Mammary epithelial cell (primary cell): ENCODE measurements at regions of chrX and their contacts with region 1.

Region 1: DNA sequence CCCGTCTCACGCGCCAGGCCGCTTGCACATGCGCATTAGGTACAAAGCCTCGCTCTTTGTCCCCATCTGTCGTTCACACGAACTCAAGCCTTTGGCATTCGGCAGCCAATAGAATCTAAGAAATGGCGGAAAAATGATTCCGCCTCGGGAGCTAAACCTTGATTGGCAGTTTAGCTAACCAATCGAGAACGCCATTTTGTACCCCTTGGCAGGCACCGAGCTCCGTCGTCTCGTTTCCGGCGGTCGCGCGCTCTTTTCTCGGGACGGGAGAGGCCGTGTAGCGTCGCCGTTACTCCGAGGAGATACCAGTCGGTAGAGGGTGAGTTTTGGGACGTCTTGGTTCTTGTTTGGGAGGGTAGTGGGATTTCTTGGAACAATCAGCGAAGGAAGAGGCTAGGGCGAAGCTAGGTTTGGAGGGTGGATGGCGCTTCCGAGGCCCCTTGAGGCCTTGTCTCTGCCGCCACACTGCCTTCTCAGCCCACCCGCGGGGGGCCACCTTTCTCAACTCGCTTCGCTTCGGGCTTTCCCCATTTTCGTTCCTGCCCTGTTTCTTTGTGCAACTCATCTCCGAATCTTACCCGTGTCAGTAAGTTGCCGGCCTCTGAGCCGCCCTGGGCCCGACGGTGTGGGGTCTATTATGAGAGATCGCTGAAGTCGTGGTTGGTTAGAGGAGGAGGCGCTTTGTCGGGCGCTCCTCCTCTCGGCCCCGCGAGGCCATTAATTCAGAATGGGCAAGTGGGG is at the start of gene NONO:
- DNase-seq: peak; percentile 97
- H3K4me3 ChIP-seq: peak within 1 kb of the TSS; percentile 60 to 78 (median 77)
- H3K27ac ChIP-seq: peak within 1 kb of the TSS; percentile 88
- H3K4me1 ChIP-seq: peaks cover 2% of the 10 kb centered on the region
- H3K27me3 ChIP-seq: no peaks in the 10 kb centered on the region
- CTCF ChIP-seq: peak in 1 of 2 donors; percentile 27
- total RNA-seq, gene NONO: 274 to 294 TPM

Region 2: DNA sequence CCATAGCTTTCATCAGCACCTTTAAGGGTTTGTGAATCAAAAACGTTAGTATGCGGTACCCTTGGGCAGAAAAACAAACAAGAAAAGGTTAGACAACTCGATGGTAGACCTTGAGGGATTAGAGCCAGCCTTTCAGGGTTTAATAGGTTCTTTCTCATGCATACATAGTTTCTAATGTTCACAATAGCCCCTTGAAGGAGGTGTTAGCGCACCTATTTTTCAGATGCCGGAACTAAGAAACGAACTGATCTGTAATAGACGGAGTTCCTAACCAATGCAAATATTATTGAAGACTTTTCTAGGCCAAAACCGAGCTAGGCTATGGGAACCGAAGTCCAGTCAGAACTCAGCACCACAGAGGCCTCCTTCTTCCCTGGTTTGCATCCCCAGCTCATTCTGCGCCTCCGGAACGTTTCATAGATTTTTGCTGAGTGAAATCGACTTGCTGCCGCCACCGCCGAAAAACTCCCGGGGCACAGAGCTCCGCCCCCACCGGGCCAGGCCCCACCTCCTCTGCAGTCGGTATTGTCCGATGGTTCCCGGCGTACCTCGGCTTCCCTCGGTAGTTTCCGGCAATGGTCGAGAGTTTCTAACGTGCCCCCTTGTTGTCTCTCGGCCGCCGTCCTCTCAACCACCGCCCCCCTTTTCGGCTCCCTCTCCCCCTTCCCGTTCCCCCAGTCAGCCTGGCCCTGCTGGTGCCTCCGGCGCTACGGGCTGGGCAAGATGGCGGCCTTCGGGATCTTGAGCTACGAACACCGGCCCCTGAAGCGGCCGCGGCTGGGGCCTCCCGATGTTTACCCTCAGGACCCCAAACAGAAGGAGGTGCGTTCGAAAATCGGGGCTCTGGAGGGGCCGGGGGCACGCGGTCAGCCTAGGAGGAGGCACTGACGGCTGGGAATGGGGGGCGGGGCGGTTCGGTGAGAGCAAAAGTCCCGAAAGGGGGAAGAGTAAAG is 165.3 kb before region 1 on chrX and contains the start of gene MED12:
- CTCF ChIA-PET with region 1: interaction called, 37 read pairs
- dilution Hi-C with region 1: no loop called
- in situ Hi-C with region 1: no loop called
- intact Hi-C with region 1: no loop called
- DNase-seq: peak; percentile 64
- H3K4me3 ChIP-seq: peak within 1 kb of the TSS; percentile 61 to 69 (median 64)
- H3K27ac ChIP-seq: peak within 1 kb of the TSS; percentile 34
- H3K4me1 ChIP-seq: peaks cover 8% of the 10 kb centered on the region
- H3K27me3 ChIP-seq: no peaks in the 10 kb centered on the region
- CTCF ChIP-seq: no peak
- total RNA-seq, gene MED12: 22.0 to 26.7 TPM

Region 3: DNA sequence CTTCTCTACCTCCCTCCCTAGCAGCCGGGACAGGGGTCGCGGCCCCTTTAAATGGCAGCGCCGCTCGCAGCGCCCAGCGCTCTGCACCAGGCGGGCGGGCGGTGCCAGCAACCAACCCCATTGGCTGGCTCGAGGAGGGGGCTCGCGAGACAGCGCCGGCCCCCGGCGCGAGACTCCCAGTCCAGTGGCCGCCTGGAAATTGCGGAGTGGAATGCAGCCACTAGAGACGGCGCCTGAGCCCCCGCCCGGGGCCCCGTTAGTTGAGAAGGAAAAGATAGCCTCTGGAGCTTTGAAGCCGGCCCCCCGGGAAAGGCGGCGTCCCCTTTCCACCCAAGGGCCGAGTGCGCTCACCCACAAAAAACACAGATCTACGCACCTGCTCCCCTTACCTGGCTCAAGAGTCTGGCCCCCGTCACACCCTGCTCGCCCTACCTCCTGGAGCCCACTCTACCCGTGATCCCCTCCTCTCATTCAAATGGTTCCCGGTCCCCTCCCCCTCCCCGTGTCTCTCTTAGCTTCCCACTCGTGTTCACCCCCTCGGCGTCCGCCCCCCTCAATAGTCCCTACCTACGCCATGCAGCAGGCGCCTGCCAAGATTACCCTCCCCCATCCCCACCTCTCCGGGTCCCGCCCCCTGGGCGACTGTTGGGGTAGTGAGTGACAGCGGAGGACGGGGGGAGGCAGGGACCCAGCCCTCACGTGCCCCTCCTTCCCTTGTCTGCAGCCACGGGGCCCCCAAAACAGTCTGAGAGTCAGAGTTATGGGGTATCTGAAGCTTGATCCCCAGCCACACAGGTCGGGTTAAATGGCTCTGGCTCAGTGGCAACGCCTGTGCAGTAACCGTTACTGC is 29.3 kb before region 1 on chrX and contains the start of gene ZMYM3:
- CTCF ChIA-PET with region 1: no interaction called
- dilution Hi-C with region 1: no loop called
- in situ Hi-C with region 1: no loop called
- intact Hi-C with region 1: loop called (anchors 1 kb)
- DNase-seq: peak; percentile 77
- H3K4me3 ChIP-seq: peak within 1 kb of the TSS; percentile 54 to 76 (median 60)
- H3K27ac ChIP-seq: no peak within 1 kb of the TSS
- H3K4me1 ChIP-seq: peaks cover 4% of the 10 kb centered on the region
- H3K27me3 ChIP-seq: no peaks in the 10 kb centered on the region
- CTCF ChIP-seq: no peak
- total RNA-seq, gene ZMYM3: 14.7 to 15.4 TPM